HepG2 (cell line): ENCODE measurements at regions of chr17 and their contacts with region 1.

Region 1: GRCh38 chr17:6269478-6269877 is 165.4 kb downstream of the AIPL1 start:
- DNase-seq: no peak
- ATAC-seq: no peak
- H3K4me3 ChIP-seq: no peak overlapping the region
- H3K27ac ChIP-seq: no peak overlapping the region
- H3K4me1 ChIP-seq: no peaks in the 10 kb centered on the region
- H3K27me3 ChIP-seq: no peaks in the 10 kb centered on the region
- CTCF ChIP-seq: no peak
- EP300 ChIP-seq: no peak
- POLR2A ChIP-seq: no peak
- RAD21 ChIP-seq: no peak

Region 2: DNA sequence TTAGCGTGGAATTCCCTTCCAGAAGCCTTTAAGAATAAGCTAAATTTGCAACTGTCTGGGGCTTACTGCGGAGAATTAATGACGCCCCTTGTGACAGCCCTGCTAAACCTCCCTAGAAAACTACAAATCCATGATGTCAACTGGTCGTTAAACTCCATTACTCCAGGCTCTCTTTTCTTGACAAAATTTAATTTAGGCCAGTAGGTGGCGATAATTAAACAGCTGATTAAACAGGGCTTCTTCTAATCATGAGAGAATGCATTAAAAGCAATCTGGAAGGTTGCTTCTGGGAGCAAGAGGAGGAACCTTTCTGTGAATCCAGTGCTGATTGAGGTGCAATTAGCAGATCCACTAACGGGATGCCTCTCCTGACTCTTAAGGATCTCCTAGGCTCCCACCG is 677.1 kb before region 1 on chr17:
- CTCF ChIA-PET with region 1: no interaction called
- POLR2A ChIA-PET with region 1: no interaction called
- in situ Hi-C with region 1: loop called (anchors 10 kb)
- intact Hi-C with region 1: no loop called
- DNase-seq: peak; percentile 33
- ATAC-seq: no peak
- H3K4me3 ChIP-seq: no peak overlapping the region
- H3K27ac ChIP-seq: no peak overlapping the region
- H3K4me1 ChIP-seq: no peaks in the 10 kb centered on the region
- H3K27me3 ChIP-seq: peaks cover 1 to 7% of the 10 kb centered on the region in 2 experiments; a peak in 2 of 5 replicates
- CTCF ChIP-seq: peak; percentile 61
- EP300 ChIP-seq: no peak
- POLR2A ChIP-seq: no peak
- RAD21 ChIP-seq: peak; percentile 15; the same call in 1 of the 2 replicates

Region 3: GRCh38 chr17:6303664-6304063 is 34.2 kb after region 1 on chr17:
- CTCF ChIA-PET with region 1: no interaction called
- POLR2A ChIA-PET with region 1: no interaction called
- in situ Hi-C with region 1: no loop called
- intact Hi-C with region 1: loop called (anchors 1 kb)
- DNase-seq: no peak
- ATAC-seq: no peak
- H3K4me3 ChIP-seq: no peak overlapping the region
- H3K27ac ChIP-seq: no peak overlapping the region
- H3K4me1 ChIP-seq: no peaks in the 10 kb centered on the region
- H3K27me3 ChIP-seq: no peaks in the 10 kb centered on the region; a peak in 1 of 5 replicates
- CTCF ChIP-seq: no peak
- EP300 ChIP-seq: no peak
- POLR2A ChIP-seq: no peak
- RAD21 ChIP-seq: no peak

Region 4: GRCh38 chr17:6352801-6353560 is 83.5 kb after region 1 on chr17:
- CTCF ChIA-PET with region 1: no interaction called
- POLR2A ChIA-PET with region 1: no interaction called
- in situ Hi-C with region 1: no loop called
- intact Hi-C with region 1: no loop called
- DNase-seq: no peak
- ATAC-seq: no peak
- H3K4me3 ChIP-seq: no peak overlapping the region
- H3K27ac ChIP-seq: no peak overlapping the region
- H3K4me1 ChIP-seq: no peaks in the 10 kb centered on the region
- H3K27me3 ChIP-seq: no peaks in the 10 kb centered on the region
- CTCF ChIP-seq: no peak
- EP300 ChIP-seq: no peak
- POLR2A ChIP-seq: no peak
- RAD21 ChIP-seq: no peak